Activated T-helper 2 cell treated with anti-CD3 and anti-CD28 coated beads, Interferon-gamma antibody, Interleukin-2, Interleukin-4, amounts not matched to agents 10 μg/mL and 5 μg/mL and 100 μg/mL, durations not matched to agents 14 hours and 24 hours and 36 hours (primary cell): ENCODE measurements at regions of chr12 and their contacts with region 1.

Region 1: DNA sequence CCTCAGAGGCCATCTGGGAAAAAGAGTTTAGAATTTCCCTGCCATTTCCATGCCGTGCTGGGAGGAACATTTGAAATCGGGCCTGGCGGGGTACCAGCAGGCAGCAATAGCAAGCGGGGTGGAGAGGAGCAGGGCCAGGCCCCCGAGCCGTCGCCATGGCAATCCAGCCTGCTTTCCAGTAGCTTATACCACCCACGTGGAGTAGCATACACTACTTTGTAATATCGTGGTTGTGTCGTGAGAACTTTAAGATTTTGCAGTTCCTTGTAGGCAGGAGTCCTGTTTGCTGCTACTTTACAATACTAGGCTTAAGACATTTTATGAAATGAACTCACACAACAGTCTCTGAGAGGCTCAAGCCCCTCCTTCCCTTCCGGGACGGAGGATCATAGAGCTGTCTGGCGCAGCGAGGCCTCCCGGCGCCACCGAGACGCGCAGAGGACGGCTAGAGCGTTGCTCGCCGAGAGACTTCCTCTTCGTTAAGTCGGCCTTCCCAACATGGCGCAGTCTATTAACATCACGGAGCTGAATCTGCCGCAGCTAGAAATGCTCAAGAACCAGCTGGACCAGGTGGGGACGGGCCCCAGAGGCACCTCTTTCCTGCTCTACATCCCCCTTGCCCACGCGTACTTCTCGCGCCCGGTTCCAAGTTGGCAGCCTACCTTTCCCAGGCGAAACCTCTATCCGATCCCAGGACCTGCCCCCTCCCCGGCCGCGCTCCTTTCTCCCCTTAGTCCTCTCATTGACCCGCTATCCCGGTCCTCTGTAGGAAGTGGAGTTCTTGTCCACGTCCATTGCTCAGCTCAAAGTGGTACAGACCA is at the start of gene PFDN5:
- DNase-seq: peak; percentile 86
- H3K4me3 Mint-ChIP-seq: peak within 1 kb of the TSS; percentile 98
- H3K27ac Mint-ChIP-seq: peak within 1 kb of the TSS; percentile 92
- H3K4me1 Mint-ChIP-seq: peaks cover 40% of the 10 kb centered on the region
- H3K27me3 Mint-ChIP-seq: no peaks in the 10 kb centered on the region
- total RNA-seq, gene PFDN5: 321 and 326 TPM in 2 replicates

Region 2: GRCh38 chr12:53180220-53180930 is 114.9 kb before region 1 on chr12 and contains the starts of genes CSAD and ZNF740:
- intact Hi-C with region 1: loop called (anchors 1 kb)
- DNase-seq: peak; percentile 97
- H3K4me3 Mint-ChIP-seq: peak within 1 kb of the TSS; percentile 91
- H3K27ac Mint-ChIP-seq: peak within 1 kb of the TSS; percentile 94
- H3K4me1 Mint-ChIP-seq: peaks cover 40% of the 10 kb centered on the region
- H3K27me3 Mint-ChIP-seq: no peaks in the 10 kb centered on the region
- total RNA-seq, gene CSAD: 20.2 TPM in 2 replicates
- total RNA-seq, gene ZNF740: 44.9 and 45.5 TPM in 2 replicates

Region 3: GRCh38 chr12:53251477-53252348 is 43.6 kb before region 1 on chr12:
- intact Hi-C with region 1: loop called (anchors 5 kb)
- DNase-seq: peak; percentile 70
- H3K4me3 Mint-ChIP-seq: peak overlapping the region; percentile 94
- H3K27ac Mint-ChIP-seq: peak overlapping the region; percentile 86
- H3K4me1 Mint-ChIP-seq: peaks cover 37% of the 10 kb centered on the region
- H3K27me3 Mint-ChIP-seq: peaks cover 2% of the 10 kb centered on the region

Region 4: DNA sequence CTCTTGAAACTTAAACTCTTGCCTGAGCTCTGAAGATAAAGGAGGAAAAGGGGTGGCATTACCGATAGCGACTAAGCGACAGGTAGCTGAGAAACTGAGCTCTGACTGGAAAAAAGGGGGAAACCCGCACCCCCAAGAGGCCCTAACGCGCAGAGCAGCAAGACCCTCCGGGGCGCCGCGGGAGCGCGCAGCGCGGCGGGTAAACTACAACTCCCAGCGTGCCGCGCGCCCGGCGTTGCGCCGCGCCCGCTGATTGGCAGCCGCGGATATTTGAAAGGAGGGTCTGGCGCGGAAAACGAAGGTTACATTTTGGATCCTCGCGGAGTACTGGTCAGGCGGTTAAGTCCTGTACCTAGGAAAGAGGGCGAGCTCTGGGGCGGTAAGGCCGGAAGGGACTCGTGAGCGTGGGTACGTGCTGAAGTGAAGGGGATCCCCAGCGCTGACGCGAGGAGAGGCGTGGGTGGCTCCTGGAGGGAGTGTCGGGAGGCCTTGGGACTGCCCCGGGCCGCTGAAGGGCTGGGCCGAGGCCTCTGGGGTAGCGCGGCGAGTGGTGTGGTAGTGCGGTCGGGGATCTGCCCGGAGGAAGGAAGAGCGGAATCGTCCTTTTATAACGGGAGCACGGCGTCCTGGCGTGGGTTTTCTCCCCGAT is 27.2 kb before region 1 on chr12 and contains the start of gene ESPL1:
- intact Hi-C with region 1: loop called (anchors 1 kb)
- DNase-seq: peak; percentile 79
- H3K4me3 Mint-ChIP-seq: peak within 1 kb of the TSS; percentile 92
- H3K27ac Mint-ChIP-seq: peak within 1 kb of the TSS; percentile 91
- H3K4me1 Mint-ChIP-seq: peaks cover 34% of the 10 kb centered on the region
- H3K27me3 Mint-ChIP-seq: no peaks in the 10 kb centered on the region
- total RNA-seq, gene ESPL1: 72.6 and 75.3 TPM in 2 replicates

Region 5: DNA sequence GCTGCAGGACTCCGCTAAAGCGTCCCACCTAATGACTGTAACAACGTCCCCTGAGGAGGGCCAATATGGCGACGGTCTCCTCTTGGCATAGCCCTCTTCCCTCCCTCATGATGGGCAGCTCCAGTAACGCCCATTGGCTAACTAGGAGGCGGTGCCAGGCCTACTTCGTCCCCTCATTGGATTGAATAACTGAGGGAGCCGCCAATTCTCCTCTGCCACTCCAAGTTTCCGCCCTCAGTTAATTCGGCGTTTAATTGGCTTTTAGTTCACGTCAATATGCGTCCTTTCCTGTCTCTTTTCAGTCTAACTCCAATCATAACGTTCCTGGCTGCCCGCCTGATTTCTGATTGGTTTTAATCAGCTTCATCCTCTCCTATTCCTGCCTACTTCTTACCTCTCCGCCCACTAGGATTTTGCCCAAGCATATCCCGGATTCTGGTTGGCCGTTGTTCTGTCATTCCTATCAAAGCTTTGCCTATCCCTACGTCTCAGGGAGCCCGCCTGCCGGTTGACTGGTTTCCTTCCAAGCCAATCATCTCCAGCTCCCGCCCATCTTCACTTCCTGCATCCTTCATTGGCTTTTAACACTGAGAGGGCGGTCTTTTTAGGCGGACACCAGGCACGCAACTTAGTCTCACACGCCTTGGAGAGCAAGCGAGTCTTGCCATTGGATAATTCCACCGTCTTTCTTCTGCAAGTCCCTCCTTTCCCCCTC is 84.3 kb after region 1 on chr12:
- intact Hi-C with region 1: loop called (anchors 5 kb)
- DNase-seq: peak; percentile 98
- H3K4me3 Mint-ChIP-seq: no peak overlapping the region
- H3K27ac Mint-ChIP-seq: no peak overlapping the region
- H3K4me1 Mint-ChIP-seq: peaks cover 35% of the 10 kb centered on the region
- H3K27me3 Mint-ChIP-seq: no peaks in the 10 kb centered on the region